Activated T-helper 1 cell treated with anti-CD3 and anti-CD28 coated beads, Interleukin-12 subunit alpha, Interleukin-12 subunit beta, Interleukin-2, Interleukin-4 antibody, amounts not matched to agents 30 ng/mL and 10 ng/mL and 1 ng/mL, durations not matched to agents 14 hours and 24 hours and 36 hours (primary cell): ENCODE measurements at regions of chr19 and their contacts with region 1.

Region 1: DNA sequence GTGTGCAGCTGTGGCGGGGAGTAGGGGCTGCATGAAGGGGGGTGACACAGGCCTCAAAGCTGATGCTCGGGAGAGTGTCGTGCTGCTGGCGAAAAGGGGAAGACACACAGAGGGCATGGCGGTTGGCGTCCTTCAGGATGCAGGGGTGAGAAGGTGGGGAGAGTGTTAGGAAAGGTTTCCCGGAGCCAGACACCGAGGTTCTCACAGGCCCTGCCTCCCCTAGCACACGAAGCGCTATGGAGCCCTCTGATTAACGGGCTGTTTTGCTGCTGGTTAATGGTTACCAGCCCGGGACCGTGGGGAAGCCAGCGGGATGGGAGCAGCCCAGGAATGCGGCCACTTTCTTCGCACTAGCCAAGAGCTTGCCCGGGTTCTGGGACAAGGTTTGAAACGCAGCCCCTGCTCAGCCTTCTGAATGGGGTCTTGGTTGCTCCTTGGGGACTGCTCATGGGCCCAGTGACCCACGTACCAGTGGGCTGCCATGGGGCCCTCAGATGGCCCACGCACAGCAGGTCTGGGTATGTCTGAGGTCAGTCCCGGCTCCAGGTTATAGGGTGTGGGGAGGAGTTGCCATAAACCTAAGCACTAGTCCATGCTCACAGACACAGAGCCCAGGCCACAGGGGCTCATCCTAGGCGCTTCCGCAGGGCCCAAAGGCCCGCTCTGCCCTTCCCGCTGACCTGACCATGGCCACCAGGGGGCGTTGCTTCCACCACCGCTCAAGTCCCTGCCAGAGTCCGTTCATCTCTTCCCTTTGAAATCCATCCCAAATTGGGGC is 31.3 kb upstream of the ISYNA1 start:
- DNase-seq: peak; percentile 43
- H3K4me3 Mint-ChIP-seq: no peak overlapping the region
- H3K27ac Mint-ChIP-seq: no peak overlapping the region
- H3K4me1 Mint-ChIP-seq: peaks cover 15% of the 10 kb centered on the region
- H3K27me3 Mint-ChIP-seq: no peaks in the 10 kb centered on the region

Region 2: GRCh38 chr19:18496167-18496979 is 27.1 kb after region 1 on chr19:
- intact Hi-C with region 1: loop called (anchors 2 kb)
- DNase-seq: peak; percentile 56
- H3K4me3 Mint-ChIP-seq: peak overlapping the region; percentile 64
- H3K27ac Mint-ChIP-seq: peak overlapping the region; percentile 80
- H3K4me1 Mint-ChIP-seq: peaks cover 63% of the 10 kb centered on the region
- H3K27me3 Mint-ChIP-seq: no peaks in the 10 kb centered on the region

Region 3: GRCh38 chr19:18571564-18572300 is 102.5 kb after region 1 on chr19 and contains the start of gene UBA52:
- intact Hi-C with region 1: loop called (anchors 5 kb)
- DNase-seq: peak; percentile 99
- H3K4me3 Mint-ChIP-seq: peak within 1 kb of the TSS; percentile 91
- H3K27ac Mint-ChIP-seq: peak within 1 kb of the TSS; percentile 98
- H3K4me1 Mint-ChIP-seq: peaks cover 27% of the 10 kb centered on the region
- H3K27me3 Mint-ChIP-seq: no peaks in the 10 kb centered on the region
- total RNA-seq, gene UBA52: 1,472 and 1,500 TPM in 2 replicates

Region 4: DNA sequence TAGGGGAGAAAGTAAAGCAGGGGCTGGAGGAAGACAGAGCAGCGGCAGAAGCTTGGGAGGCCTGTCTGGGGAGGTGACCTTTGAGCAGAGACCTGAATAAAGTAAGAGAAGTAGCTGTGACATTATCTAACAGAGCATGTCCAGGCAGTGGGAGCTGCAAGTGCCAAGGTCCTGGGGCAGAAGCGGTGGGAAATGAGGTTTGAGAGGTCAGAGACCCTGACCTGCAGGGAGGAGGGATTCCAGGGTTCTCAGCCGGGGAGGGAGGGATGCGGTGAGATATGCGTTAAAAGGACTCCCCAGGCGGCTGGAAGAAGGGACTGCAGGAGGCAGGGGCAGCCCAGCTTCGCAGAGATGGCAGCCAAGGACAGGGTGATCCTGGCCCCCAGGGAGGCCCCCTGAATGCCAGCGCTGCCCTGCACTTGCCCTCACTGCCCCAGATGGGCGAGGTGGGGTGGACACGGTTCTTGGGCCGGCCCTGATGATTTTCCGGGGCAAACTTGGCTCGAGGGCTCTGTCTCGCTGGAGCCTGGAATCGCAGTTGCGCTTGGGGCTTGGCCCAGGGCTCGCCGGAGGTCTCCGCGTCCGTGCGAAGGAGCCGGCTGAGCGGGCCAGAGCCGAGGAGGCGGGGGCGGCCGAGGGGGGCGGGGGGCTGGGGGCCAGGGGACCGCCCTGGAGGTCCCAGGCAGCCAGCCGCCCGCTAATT is 134.1 kb after region 1 on chr19:
- intact Hi-C with region 1: no loop called
- DNase-seq: no peak
- H3K4me3 Mint-ChIP-seq: no peak overlapping the region
- H3K27ac Mint-ChIP-seq: no peak overlapping the region
- H3K4me1 Mint-ChIP-seq: no peaks in the 10 kb centered on the region
- H3K27me3 Mint-ChIP-seq: peaks cover 49% of the 10 kb centered on the region

Region 5: GRCh38 chr19:18846862-18847548 is 377.7 kb after region 1 on chr19:
- intact Hi-C with region 1: loop called (anchors 5 kb)
- DNase-seq: peak; percentile 51
- H3K4me3 Mint-ChIP-seq: no peak overlapping the region
- H3K27ac Mint-ChIP-seq: no peak overlapping the region
- H3K4me1 Mint-ChIP-seq: peaks cover 55% of the 10 kb centered on the region
- H3K27me3 Mint-ChIP-seq: no peaks in the 10 kb centered on the region